A549 (cell line): ENCODE measurements at regions of chr12 and their contacts with region 1.

Region 1: DNA sequence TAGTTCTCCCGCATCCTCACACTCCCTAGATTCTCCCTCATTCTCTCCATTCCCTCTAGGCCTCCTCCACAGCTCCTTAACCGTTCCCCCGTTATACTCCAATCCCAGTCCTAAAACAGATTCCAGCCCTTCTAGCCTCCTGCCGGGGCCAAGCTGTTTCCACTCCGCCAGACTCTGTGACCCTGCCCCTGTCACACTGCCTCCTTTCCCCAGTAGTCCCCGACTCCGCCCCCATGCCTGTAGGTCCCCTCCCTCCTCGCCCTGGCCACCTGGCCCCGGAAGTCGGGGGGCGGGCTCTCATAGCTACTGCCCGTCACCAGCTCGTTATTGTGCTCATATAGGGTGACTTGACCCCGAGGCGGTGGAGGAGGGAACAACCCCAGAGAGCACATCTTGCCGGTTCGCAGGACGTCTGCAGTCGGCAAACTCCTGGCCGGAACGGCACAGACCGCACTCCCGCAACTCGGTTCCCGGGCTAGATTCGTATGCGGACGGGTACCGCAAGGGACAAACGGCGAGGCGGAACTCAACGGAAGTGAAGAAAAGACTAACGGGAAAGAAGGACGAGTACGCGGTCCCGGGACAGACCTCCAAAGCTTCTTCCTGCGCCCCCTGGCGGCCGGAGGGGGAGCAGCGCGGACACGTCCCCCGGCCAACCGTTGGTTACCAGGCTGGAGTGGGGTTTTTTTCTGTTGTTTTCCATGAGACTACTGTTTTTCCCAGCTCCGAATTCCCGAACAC is at the start of gene AAAS:
- DNase-seq: peak; percentile 97 to 100
- ATAC-seq: peak; percentile 90
- H3K4me3 ChIP-seq: peak within 1 kb of the TSS; percentile 60
- H3K27ac ChIP-seq: peak within 1 kb of the TSS; percentile 96 to 98
- H3K4me1 ChIP-seq: peaks cover 24% of the 10 kb centered on the region
- CTCF ChIP-seq: peak; percentile 95
- EP300 ChIP-seq: no peak
- POLR2A ChIP-seq: peak; percentile 72
- RAD21 ChIP-seq: peak in 1 of 2 experiments; percentile 29; a peak in 2 of 5 replicates
- polyA plus RNA-seq, gene AAAS: 82.6 and 104 TPM in 2 replicates

Region 2: GRCh38 chr12:53295070-53295890 is 26.0 kb before region 1 on chr12 and contains the start of gene PFDN5:
- CTCF ChIA-PET with region 1: interaction called, 52 read pairs
- POLR2A ChIA-PET with region 1: interaction called, 18 read pairs
- DNase-seq: peak; percentile 88 to 96
- ATAC-seq: peak; percentile 83 to 88
- H3K4me3 ChIP-seq: peak within 1 kb of the TSS; percentile 75
- H3K27ac ChIP-seq: peak within 1 kb of the TSS; percentile 85 to 92
- H3K4me1 ChIP-seq: peaks cover 34% of the 10 kb centered on the region
- CTCF ChIP-seq: no peak
- EP300 ChIP-seq: no peak
- POLR2A ChIP-seq: peak; percentile 79
- RAD21 ChIP-seq: no peak
- polyA plus RNA-seq, gene PFDN5: 729 and 848 TPM in 2 replicates

Region 3: GRCh38 chr12:53344824-53345485 is 23.7 kb after region 1 on chr12:
- CTCF ChIA-PET with region 1: interaction called, 638 read pairs
- POLR2A ChIA-PET with region 1: interaction called, 51 read pairs
- DNase-seq: peak; percentile 68 to 76
- ATAC-seq: peak; percentile 87 to 88
- H3K4me3 ChIP-seq: peak overlapping the region; percentile 64
- H3K27ac ChIP-seq: peak overlapping the region; percentile 81 to 93
- H3K4me1 ChIP-seq: peaks cover 9% of the 10 kb centered on the region; the same call in 2 of the 3 replicates
- CTCF ChIP-seq: peak; percentile 74
- EP300 ChIP-seq: no peak
- POLR2A ChIP-seq: peak; percentile 59
- RAD21 ChIP-seq: peak; percentile 74 to 79

Region 4: GRCh38 chr12:53414756-53415417 is 93.6 kb after region 1 on chr12:
- CTCF ChIA-PET with region 1: interaction called, 137 read pairs
- POLR2A ChIA-PET with region 1: interaction called, 4 read pairs
- DNase-seq: no peak
- ATAC-seq: no peak; a peak in 1 of 6 replicates
- H3K4me3 ChIP-seq: no peak overlapping the region
- H3K27ac ChIP-seq: no peak overlapping the region
- H3K4me1 ChIP-seq: peaks cover 45% of the 10 kb centered on the region
- CTCF ChIP-seq: no peak
- EP300 ChIP-seq: no peak
- POLR2A ChIP-seq: no peak
- RAD21 ChIP-seq: no peak

Region 5: DNA sequence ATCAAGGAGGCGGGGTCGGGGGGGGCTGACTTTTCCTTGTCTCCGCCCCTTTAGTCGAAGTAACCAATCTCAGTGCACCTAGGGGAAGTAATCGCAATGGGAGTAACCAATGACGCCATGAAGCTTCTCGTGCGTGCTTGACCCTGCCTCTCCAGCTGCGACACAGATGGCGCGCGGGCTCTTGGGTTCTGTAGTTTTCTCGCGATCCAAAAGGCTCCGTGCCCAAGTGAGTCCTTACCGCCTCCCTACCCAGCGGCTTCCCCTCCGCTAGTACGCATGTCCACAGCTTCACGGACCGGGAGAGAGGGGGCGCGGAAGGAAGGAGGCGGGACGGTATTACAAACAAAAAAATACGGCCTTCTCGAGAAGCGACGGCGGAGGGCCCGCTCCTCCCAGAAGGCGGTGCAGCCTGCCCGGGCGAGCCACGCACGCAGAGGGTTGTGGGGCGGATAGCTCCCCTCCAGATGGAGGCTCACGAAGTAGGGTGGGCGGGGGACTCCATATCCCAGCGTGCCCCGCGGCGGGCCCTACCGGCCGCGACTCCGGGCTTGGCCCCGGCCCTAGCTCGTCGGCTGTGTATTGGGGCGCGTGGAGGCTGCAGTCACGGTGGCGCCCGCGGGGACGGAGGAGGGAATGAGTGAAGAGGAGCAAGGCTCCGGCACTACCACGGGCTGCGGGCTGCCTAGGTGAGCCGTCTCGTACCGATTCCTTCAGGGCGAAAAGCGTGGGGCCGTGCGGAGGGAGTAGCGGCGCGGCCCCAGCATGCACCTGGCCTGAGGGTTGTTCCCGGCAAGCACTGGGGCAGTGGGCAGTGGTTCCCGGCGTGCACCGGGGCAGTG is 179.8 kb after region 1 on chr12 and contains the start of gene TARBP2:
- CTCF ChIA-PET with region 1: interaction called, 169 read pairs
- POLR2A ChIA-PET with region 1: interaction called, 19 read pairs
- DNase-seq: peak; percentile 96 to 100
- ATAC-seq: peak; percentile 73 to 82
- H3K4me3 ChIP-seq: peak within 1 kb of the TSS; percentile 64
- H3K27ac ChIP-seq: peak within 1 kb of the TSS; percentile 94 to 96
- H3K4me1 ChIP-seq: peaks cover 45% of the 10 kb centered on the region
- CTCF ChIP-seq: no peak
- EP300 ChIP-seq: no peak
- POLR2A ChIP-seq: peak; percentile 72
- RAD21 ChIP-seq: no peak
- polyA plus RNA-seq, gene TARBP2: 41.5 and 51.2 TPM in 2 replicates